Ovary (tissue), 10 donors: ENCODE measurements at regions of chr17 and their contacts with region 1.

Region 1: GRCh38 chr17:64411999-64412771 is 21.5 kb upstream of the PECAM1 start:
- DNase-seq: peak in 4 of 5 donors; percentile 58 to 66 (median 64)
- H3K4me3 ChIP-seq: no peak overlapping the region
- H3K27ac ChIP-seq: peak overlapping the region; percentile 56 to 67
- H3K4me1 ChIP-seq: peaks cover 15% of the 10 kb centered on the region
- H3K27me3 ChIP-seq: no peaks in the 10 kb centered on the region
- CTCF ChIP-seq: no peak
- EP300 ChIP-seq: no peak
- POLR2A ChIP-seq: no peak

Region 2: DNA sequence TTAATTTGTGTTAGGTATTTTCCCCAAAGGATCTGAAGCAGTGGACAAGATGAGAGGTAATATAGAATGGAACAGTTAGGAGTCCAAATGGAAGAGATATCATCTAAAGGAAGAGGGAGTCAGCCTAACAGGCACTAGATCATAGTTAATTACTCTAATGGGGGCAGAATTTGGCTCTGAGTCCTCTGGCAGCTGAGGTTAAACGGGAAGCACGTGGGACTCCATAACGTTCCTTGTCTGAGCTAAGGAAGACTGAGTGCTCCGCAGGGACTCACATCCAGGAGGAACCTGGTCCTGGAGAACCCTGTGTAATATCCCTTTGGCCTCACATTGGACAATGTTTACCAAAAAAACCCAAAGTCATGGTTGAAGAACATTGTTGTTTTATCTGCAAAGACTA is 102.5 kb before region 1 on chr17:
- intact Hi-C with region 1: loop called in 1 of 4 experiments (anchors 5 kb)
- DNase-seq: no peak
- H3K4me3 ChIP-seq: no peak overlapping the region
- H3K27ac ChIP-seq: no peak overlapping the region
- H3K4me1 ChIP-seq: peaks cover 5% of the 10 kb centered on the region
- H3K27me3 ChIP-seq: no peaks in the 10 kb centered on the region
- CTCF ChIP-seq: no peak
- EP300 ChIP-seq: no peak
- POLR2A ChIP-seq: no peak

Region 3: GRCh38 chr17:64320613-64321553 is 91.3 kb before region 1 on chr17:
- intact Hi-C with region 1: loop called in 2 of 4 experiments (anchors 2 kb)
- DNase-seq: peak; percentile 63 to 85 (median 68)
- H3K4me3 ChIP-seq: no peak overlapping the region
- H3K27ac ChIP-seq: no peak overlapping the region
- H3K4me1 ChIP-seq: peaks cover 3% of the 10 kb centered on the region
- H3K27me3 ChIP-seq: no peaks in the 10 kb centered on the region
- CTCF ChIP-seq: peak; percentile 81 to 93 (median 82)
- EP300 ChIP-seq: no peak
- POLR2A ChIP-seq: no peak